H1 (cell line): ENCODE measurements at regions of chr2 and their contacts with region 1.

Region 1: DNA sequence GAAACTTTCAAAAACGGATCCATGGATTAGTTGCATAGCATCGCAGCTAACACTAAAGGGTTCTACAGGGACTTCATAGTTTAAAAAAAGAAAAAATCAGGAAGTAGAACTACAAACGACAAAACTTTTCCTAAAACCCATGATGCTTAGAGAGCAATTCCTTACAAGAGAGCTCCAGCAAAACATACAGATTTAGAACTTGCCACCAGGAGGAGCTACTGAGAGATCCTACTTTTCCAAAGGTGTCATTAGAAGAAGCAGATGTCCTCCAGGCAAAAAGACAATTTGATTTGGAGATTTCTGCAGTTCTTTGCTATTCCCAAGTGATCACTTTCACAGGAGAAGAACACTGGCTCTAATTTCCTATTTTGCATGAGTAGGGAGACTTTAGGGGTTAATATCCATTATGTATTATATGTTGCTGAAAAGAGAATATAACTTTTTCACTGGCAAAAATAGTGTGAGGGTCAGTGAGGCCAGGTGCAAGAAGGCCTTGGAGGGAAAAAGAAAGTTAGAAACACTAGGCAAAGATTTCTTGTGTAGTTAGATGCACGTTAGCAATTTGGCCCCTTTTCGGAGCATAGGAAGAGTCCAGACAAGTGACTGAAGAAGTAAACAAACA is 436.2 kb downstream of the SUCLG1 start:
- DNase-seq: no peak
- H3K4me3 ChIP-seq: no peak overlapping the region
- H3K27ac ChIP-seq: no peak overlapping the region
- H3K4me1 ChIP-seq: no peaks in the 10 kb centered on the region
- H3K27me3 ChIP-seq: no peaks in the 10 kb centered on the region
- CTCF ChIP-seq: peak in 2 of 3 experiments; percentile 64 to 74; a peak in 2 of 4 replicates
- EP300 ChIP-seq: no peak
- POLR2A ChIP-seq: no peak
- RAD21 ChIP-seq: peak; percentile 62 to 74

Region 2: GRCh38 chr2:84033347-84033974 is 10.5 kb after region 1 on chr2:
- CTCF ChIA-PET with region 1: interaction called, 27 read pairs
- POLR2A ChIA-PET with region 1: no interaction called
- DNase-seq: no peak
- H3K4me3 ChIP-seq: no peak overlapping the region
- H3K27ac ChIP-seq: no peak overlapping the region
- H3K4me1 ChIP-seq: no peaks in the 10 kb centered on the region
- H3K27me3 ChIP-seq: no peaks in the 10 kb centered on the region
- CTCF ChIP-seq: no peak
- EP300 ChIP-seq: no peak
- POLR2A ChIP-seq: no peak
- RAD21 ChIP-seq: no peak